ENCODE measurements at regions of chr1 and their contacts with region 1.

Region 1: DNA sequence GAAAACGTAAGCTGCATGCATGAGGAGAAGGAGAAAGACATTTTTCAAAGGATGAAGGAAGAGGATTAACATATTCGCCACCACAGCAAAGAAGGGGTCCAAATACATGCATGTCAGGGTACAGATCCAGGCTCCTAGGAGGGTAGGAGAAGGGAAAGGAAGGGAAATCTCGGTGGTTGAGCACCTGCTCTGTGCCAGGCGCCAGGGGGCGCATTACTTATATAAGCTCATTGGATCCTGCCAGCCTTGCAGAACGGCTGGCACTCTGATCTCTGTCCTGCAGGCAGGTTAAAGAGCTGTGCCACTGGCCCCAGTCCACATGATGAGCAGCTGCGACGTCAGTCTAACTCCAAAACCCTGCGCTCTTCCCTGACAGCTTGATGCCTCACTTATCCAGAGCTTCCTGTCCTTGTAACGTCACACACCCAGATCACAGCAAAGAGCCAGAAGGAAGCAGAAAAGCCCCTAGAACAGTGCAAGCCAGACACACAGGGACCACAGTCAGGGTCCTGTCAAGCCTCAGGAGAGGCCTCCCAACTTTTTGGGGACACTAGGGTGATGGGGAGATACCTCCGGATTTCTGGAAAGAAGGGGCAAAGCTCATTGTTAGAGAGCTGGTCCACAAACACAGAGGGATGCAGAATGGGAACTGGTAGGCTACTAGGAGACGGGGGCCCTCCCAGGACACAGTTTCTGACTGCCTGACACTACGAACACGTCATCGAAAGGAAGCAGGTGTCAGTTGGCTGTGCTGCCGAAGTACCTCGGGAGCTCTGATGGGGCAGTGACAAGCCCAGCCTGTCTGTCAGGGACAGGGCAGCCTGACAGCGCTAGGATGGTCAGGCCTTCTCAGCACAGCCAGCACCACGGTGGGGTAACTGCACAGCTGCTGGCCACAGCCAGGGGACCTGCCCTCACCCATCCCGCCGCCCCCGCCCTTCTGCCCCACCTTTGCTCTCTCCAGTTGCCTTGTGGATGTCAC is 99.1 kb downstream of the BEND5 start:
- DNase-seq: peak; percentile 76
- H3K4me3 Mint-ChIP-seq: no peak overlapping the region
- H3K27ac Mint-ChIP-seq: no peak overlapping the region
- H3K4me1 Mint-ChIP-seq: peaks cover 20% of the 10 kb centered on the region
- H3K27me3 Mint-ChIP-seq: no peaks in the 10 kb centered on the region
- CTCF ChIP-seq: peak; percentile 65

Region 2: GRCh38 chr1:48572646-48573261 is 104.8 kb before region 1 on chr1:
- CTCF ChIA-PET with region 1: interaction called, 15 read pairs
- POLR2A ChIA-PET with region 1: no interaction called
- intact Hi-C with region 1: no loop called
- DNase-seq: peak; percentile 62
- H3K4me3 Mint-ChIP-seq: no peak overlapping the region
- H3K27ac Mint-ChIP-seq: no peak overlapping the region
- H3K4me1 Mint-ChIP-seq: peaks cover 7% of the 10 kb centered on the region
- H3K27me3 Mint-ChIP-seq: peaks cover 11% of the 10 kb centered on the region
- CTCF ChIP-seq: peak; percentile 75

Region 3: DNA sequence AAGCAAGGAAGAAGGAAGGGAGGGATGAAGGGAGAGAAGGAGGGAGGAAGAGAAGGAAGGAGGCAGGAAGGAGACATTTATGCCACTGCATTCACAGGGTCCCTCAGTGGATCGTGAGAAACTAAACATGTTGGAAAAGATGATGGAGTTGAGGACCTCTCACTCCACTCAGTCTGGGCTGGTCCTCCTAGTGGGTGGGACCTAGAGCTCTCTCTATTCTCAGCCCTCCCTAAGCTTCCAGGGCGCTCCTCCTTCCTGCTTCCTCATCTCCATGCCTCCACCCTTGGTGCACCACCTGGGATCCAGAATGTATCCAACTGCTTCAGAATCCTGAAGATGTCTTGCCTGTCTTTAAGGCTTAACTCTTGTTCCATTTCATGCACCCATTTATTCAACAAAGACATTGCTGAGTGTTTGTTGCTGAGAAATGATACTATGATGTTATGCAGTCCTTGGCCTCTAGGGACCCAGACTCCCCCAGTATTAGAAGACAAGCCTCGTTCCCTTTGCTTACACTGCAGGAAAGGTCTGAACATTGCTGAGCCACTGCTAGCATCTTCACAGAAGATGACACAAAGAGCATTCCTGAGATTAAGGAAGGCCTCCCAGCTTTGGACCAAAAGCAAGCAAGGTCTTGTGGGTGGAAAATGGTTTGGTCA is 10.6 kb after region 1 on chr1:
- CTCF ChIA-PET with region 1: interaction called, 159 read pairs
- POLR2A ChIA-PET with region 1: no interaction called
- intact Hi-C with region 1: no loop called
- DNase-seq: peak; percentile 16
- H3K4me3 Mint-ChIP-seq: no peak overlapping the region
- H3K27ac Mint-ChIP-seq: no peak overlapping the region
- H3K4me1 Mint-ChIP-seq: no peaks in the 10 kb centered on the region
- H3K27me3 Mint-ChIP-seq: peaks cover 33% of the 10 kb centered on the region
- CTCF ChIP-seq: no peak

Region 4: DNA sequence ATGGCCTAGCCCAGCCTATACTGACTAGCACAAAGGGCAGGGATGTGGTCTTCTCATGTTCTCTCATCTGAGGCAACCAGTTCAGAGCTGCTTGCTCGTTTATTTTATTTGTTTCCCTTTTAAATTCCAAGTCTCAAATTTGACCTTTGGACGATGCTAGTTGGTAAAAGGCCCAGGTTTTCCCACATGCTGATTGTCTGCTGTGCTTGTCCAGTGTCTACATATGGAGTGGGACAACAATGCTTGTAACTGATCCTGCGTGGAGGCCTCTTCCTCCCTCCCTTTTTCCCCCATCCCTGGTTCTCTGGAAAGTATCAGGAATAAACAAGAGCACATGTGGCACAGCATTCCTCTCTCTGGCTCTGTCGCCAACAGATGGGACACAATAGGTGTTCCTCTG is 133.1 kb after region 1 on chr1:
- CTCF ChIA-PET with region 1: interaction called, 11 read pairs
- POLR2A ChIA-PET with region 1: no interaction called
- intact Hi-C with region 1: no loop called
- DNase-seq: no peak
- H3K4me3 Mint-ChIP-seq: no peak overlapping the region
- H3K27ac Mint-ChIP-seq: no peak overlapping the region
- H3K4me1 Mint-ChIP-seq: peaks cover 6% of the 10 kb centered on the region
- H3K27me3 Mint-ChIP-seq: no peaks in the 10 kb centered on the region
- CTCF ChIP-seq: no peak

Region 5: GRCh38 chr1:48870596-48870995 is 193.0 kb after region 1 on chr1:
- CTCF ChIA-PET with region 1: interaction called, 25 read pairs
- POLR2A ChIA-PET with region 1: no interaction called
- intact Hi-C with region 1: loop called (anchors 5 kb)
- DNase-seq: peak; percentile 65
- H3K4me3 Mint-ChIP-seq: no peak overlapping the region
- H3K27ac Mint-ChIP-seq: peak overlapping the region; percentile 15
- H3K4me1 Mint-ChIP-seq: peaks cover 22% of the 10 kb centered on the region
- H3K27me3 Mint-ChIP-seq: no peaks in the 10 kb centered on the region
- CTCF ChIP-seq: peak; percentile 32

Region 6: GRCh38 chr1:48916130-48917069 is 238.8 kb after region 1 on chr1:
- CTCF ChIA-PET with region 1: interaction called, 24 read pairs
- POLR2A ChIA-PET with region 1: interaction called, 3 read pairs
- intact Hi-C with region 1: loop called (anchors 1 kb)
- DNase-seq: peak; percentile 70
- H3K4me3 Mint-ChIP-seq: no peak overlapping the region
- H3K27ac Mint-ChIP-seq: no peak overlapping the region
- H3K4me1 Mint-ChIP-seq: peaks cover 8% of the 10 kb centered on the region
- H3K27me3 Mint-ChIP-seq: no peaks in the 10 kb centered on the region
- CTCF ChIP-seq: peak; percentile 44

Measured in MCF 10A (cell line).